H1 (cell line): ENCODE measurements at regions of chr1 and their contacts with region 1.

Region 1: GRCh38 chr1:28893403-28894102 is 20.8 kb upstream of the EPB41 start:
- DNase-seq: peak in 1 of 2 experiments; percentile 63
- H3K4me3 ChIP-seq: no peak overlapping the region
- H3K27ac ChIP-seq: no peak overlapping the region
- H3K4me1 ChIP-seq: peaks cover 0 to 3% (median 1%) of the 10 kb centered on the region in 4 experiments; a peak in 2 of 7 replicates
- H3K27me3 ChIP-seq: peaks cover 0 to 6% (median under 1%) of the 10 kb centered on the region in 4 experiments; a peak in 3 of 7 replicates
- CTCF ChIP-seq: peak; percentile 68 to 83 (median 73)
- EP300 ChIP-seq: no peak
- POLR2A ChIP-seq: no peak
- RAD21 ChIP-seq: peak; percentile 70 to 80

Region 2: DNA sequence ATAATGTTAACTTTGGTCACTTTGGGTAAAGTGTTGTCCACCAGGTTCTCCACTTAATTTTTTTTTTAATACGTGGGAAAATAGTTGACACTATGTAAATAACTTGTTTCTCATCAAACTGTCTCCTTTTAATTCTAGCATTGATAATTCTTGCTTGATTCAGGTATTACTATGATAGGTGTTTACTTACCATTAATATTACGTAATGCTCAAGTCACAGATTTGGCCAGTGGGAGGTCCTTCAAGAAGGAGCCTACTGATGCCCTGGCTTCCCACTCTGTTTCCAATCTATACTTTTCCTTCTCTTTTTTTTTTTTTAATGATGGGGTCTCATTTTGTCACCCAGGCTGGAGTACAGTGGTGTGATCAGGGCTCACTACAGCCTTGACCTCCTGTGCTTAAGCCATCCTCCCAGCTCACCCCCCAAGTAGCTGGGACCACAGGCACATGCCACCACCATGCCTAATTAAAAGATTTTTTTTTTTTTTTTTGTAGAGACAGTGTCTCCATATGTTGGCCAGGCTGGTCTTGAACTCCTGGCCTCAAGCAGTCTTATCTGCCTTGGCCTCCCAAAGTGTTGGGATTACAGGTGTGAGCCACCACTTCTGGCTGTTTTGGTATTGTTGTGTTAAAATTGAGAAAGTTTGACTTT is 126.9 kb before region 1 on chr1:
- CTCF ChIA-PET with region 1: no interaction called
- POLR2A ChIA-PET with region 1: no interaction called
- DNase-seq: no peak
- H3K4me3 ChIP-seq: no peak overlapping the region
- H3K27ac ChIP-seq: no peak overlapping the region
- H3K4me1 ChIP-seq: no peaks in the 10 kb centered on the region
- H3K27me3 ChIP-seq: no peaks in the 10 kb centered on the region
- CTCF ChIP-seq: no peak
- EP300 ChIP-seq: no peak
- POLR2A ChIP-seq: no peak
- RAD21 ChIP-seq: no peak

Region 3: DNA sequence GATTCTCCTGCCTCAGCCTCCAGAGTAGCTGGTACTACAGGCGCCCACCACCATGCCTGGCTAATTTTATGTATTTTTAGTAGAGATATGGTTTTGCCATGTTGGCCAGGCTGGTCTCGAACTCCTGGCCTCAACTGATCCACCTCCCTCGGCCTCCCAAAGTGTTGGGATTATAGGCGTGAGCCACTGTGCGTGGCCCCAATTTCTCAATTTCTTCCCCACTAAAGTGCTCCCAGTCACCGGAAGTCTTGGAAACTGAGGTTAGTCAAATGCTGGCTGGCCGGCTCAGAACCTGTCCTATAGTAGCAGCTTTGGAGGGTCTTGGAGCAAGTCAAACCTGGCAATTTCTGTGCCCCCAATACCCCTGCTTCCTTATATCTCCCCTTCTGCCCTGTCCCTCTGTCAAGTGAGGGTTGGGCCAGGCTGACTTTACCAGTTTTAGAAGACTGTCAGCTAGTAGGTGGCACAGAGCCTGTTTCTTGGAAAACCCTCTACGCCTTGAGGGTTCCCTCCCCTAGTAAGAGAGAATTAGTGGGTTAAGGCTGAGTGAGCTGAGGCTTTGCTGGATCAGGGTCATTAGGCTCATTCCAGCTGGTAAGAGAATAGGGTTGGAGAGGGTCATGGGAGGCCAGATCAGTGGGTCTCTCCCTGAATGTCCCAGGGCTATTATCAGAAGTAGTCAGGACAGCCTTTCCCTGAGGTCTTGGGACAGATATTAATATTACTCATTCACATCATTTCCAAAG is 12.5 kb after region 1 on chr1:
- CTCF ChIA-PET with region 1: interaction called, 24 read pairs
- POLR2A ChIA-PET with region 1: interaction called, 4 read pairs
- DNase-seq: no peak
- H3K4me3 ChIP-seq: no peak overlapping the region
- H3K27ac ChIP-seq: no peak overlapping the region
- H3K4me1 ChIP-seq: no peaks in the 10 kb centered on the region
- H3K27me3 ChIP-seq: no peaks in the 10 kb centered on the region
- CTCF ChIP-seq: no peak
- EP300 ChIP-seq: no peak
- POLR2A ChIP-seq: no peak
- RAD21 ChIP-seq: no peak

Region 4: DNA sequence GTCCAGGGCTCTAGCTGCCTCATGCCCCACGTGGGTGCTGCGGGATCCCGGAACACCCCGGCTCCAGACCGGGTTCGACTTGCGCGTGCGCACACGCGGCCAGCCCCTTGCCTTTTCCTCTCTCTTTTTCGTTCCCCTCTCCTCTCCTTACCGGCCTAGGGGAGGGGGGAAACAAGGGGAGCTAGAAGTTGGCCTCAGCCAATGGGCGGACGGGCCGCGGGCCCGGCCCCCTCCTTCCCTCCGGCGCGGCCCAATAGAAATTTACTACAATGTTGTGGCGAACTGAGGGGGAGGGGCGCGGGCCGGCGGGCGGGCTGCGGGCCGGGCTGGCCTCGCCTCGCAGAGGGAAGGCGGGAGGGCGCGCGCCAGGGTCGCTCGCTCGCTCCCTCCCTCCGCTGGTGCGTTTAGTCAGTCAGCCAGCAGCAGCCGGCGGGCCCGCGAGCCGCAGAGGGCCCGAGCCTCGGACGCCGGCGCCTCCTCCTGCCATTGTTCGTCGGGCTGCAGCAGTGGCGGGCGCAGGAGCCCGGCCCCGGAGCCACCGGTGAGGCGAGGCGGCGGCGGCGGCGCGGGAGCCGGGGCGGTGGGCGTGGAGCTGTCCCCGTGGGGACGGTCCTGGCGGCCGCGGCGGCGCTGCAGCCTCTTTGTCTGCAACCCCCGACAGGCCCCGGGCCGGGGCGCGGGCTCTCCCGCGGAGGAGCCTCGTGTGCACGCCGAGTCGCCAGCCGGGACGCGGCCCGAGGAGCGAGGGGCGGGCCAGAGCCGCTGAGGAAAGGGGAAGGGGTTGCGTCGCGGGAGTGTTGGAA is 20.9 kb after region 1 on chr1 and contains the start of gene EPB41:
- CTCF ChIA-PET with region 1: interaction called, 12 read pairs
- POLR2A ChIA-PET with region 1: interaction called, 16 read pairs
- DNase-seq: peak; percentile 96
- H3K4me3 ChIP-seq: peak within 1 kb of the TSS; percentile 78 to 95 (median 94)
- H3K27ac ChIP-seq: peak within 1 kb of the TSS; percentile 74
- H3K4me1 ChIP-seq: peaks cover 4 to 15% (median 7%) of the 10 kb centered on the region in 4 experiments; a peak in 5 of 7 replicates
- H3K27me3 ChIP-seq: no peaks in the 10 kb centered on the region
- CTCF ChIP-seq: no peak
- EP300 ChIP-seq: no peak
- POLR2A ChIP-seq: peak; percentile 78 to 90
- RAD21 ChIP-seq: no peak
- total RNA-seq, gene EPB41: 106 and 109 TPM in 2 replicates

Region 5: GRCh38 chr1:28921286-28921869 is 27.8 kb after region 1 on chr1:
- CTCF ChIA-PET with region 1: interaction called, 12 read pairs
- POLR2A ChIA-PET with region 1: interaction called, 3 read pairs
- DNase-seq: no peak
- H3K4me3 ChIP-seq: no peak overlapping the region
- H3K27ac ChIP-seq: no peak overlapping the region
- H3K4me1 ChIP-seq: peaks cover 0 to 2% (median under 1%) of the 10 kb centered on the region in 4 experiments; a peak in 2 of 7 replicates
- H3K27me3 ChIP-seq: no peaks in the 10 kb centered on the region
- CTCF ChIP-seq: no peak
- EP300 ChIP-seq: no peak
- POLR2A ChIP-seq: no peak
- RAD21 ChIP-seq: no peak

Region 6: GRCh38 chr1:28983509-28984310 is 90.2 kb after region 1 on chr1:
- CTCF ChIA-PET with region 1: interaction called, 10 read pairs
- POLR2A ChIA-PET with region 1: no interaction called
- DNase-seq: peak in 1 of 2 experiments; percentile 58
- H3K4me3 ChIP-seq: no peak overlapping the region
- H3K27ac ChIP-seq: 0 out of 2 replicates have a peak overlapping the region, but pooled peaks have one; percentile 46
- H3K4me1 ChIP-seq: peaks cover 2 to 7% (median 5%) of the 10 kb centered on the region in 4 experiments
- H3K27me3 ChIP-seq: no peaks in the 10 kb centered on the region
- CTCF ChIP-seq: peak; percentile 35 to 53 (median 51)
- EP300 ChIP-seq: no peak
- POLR2A ChIP-seq: no peak
- RAD21 ChIP-seq: peak; percentile 39 to 50